GM12878 (cell line): ENCODE measurements at regions of chr11 and their contacts with region 1.

Region 1: GRCh38 chr11:9130297-9130696 is 38.9 kb upstream of the SCUBE2 start:
- DNase-seq: no peak
- ATAC-seq: peak; percentile 72
- H3K4me3 ChIP-seq: no peak overlapping the region
- H3K27ac ChIP-seq: no peak overlapping the region
- H3K4me1 ChIP-seq: no peaks in the 10 kb centered on the region
- H3K27me3 ChIP-seq: no peaks in the 10 kb centered on the region
- CTCF ChIP-seq: peak in 2 of 3 experiments; percentile 15 to 16; a peak in 2 of 6 replicates
- EP300 ChIP-seq: no peak
- POLR2A ChIP-seq: no peak
- RAD21 ChIP-seq: no peak

Region 2: GRCh38 chr11:8911029-8911826 is 219.1 kb before region 1 on chr11 and contains the start of gene AKIP1:
- CTCF ChIA-PET with region 1: interaction called, 6 read pairs
- POLR2A ChIA-PET with region 1: no interaction called
- RAD21 ChIA-PET with region 1: no interaction called
- SMC1A ChIA-PET with region 1: interaction called, 13 read pairs
- in situ Hi-C with region 1: no loop called
- intact Hi-C with region 1: no loop called
- DNase-seq: peak; percentile 65
- ATAC-seq: peak; percentile 88
- H3K4me3 ChIP-seq: peak within 1 kb of the TSS; percentile 95
- H3K27ac ChIP-seq: peak within 1 kb of the TSS; percentile 65
- H3K4me1 ChIP-seq: peaks cover 11% of the 10 kb centered on the region
- H3K27me3 ChIP-seq: no peaks in the 10 kb centered on the region; a peak in 1 of 4 replicates
- CTCF ChIP-seq: no peak
- EP300 ChIP-seq: no peak
- POLR2A ChIP-seq: peak; percentile 61; the same call in 1 of the 2 replicates
- RAD21 ChIP-seq: no peak
- polyA plus RNA-seq, gene AKIP1: 5.1 to 14.7 TPM

Region 3: GRCh38 chr11:9092853-9093778 is 37.2 kb before region 1 on chr11:
- CTCF ChIA-PET with region 1: interaction called, 9 read pairs
- POLR2A ChIA-PET with region 1: no interaction called
- RAD21 ChIA-PET with region 1: interaction called, 3 read pairs
- SMC1A ChIA-PET with region 1: interaction called, 8 read pairs
- in situ Hi-C with region 1: no loop called
- intact Hi-C with region 1: loop called (anchors 5 kb)
- DNase-seq: no peak
- ATAC-seq: peak; percentile 46; the same call in 2 of the 3 replicates
- H3K4me3 ChIP-seq: no peak overlapping the region
- H3K27ac ChIP-seq: no peak overlapping the region
- H3K4me1 ChIP-seq: no peaks in the 10 kb centered on the region
- H3K27me3 ChIP-seq: peaks cover 13 to 26% of the 10 kb centered on the region in 2 experiments
- CTCF ChIP-seq: peak; percentile 23 to 31 (median 24); a peak in 3 of 6 replicates
- EP300 ChIP-seq: no peak
- POLR2A ChIP-seq: no peak
- RAD21 ChIP-seq: no peak